ENCODE measurements at regions of chr1 and their contacts with region 1.

Region 1: GRCh38 chr1:170929835-170930554 is 5.3 kb upstream of the MROH9 start:
- DNase-seq: peak in 1 of 2 experiments; percentile 50
- H3K4me3 ChIP-seq: no peak overlapping the region
- H3K4me3 Mint-ChIP-seq: no peak overlapping the region
- H3K27ac Mint-ChIP-seq: no peak overlapping the region
- H3K4me1 ChIP-seq: no peaks in the 10 kb centered on the region
- H3K4me1 Mint-ChIP-seq: no peaks in the 10 kb centered on the region
- H3K27me3 ChIP-seq: no peaks in the 10 kb centered on the region
- H3K27me3 Mint-ChIP-seq: no peaks in the 10 kb centered on the region
- CTCF ChIP-seq: peak; percentile 55 to 74

Region 2: GRCh38 chr1:170692866-170693575 is 237.0 kb before region 1 on chr1:
- CTCF ChIA-PET with region 1: interaction called, 8 read pairs
- POLR2A ChIA-PET with region 1: no interaction called
- intact Hi-C with region 1: loop called (anchors 1 kb)
- DNase-seq: no peak
- H3K4me3 ChIP-seq: no peak overlapping the region
- H3K4me3 Mint-ChIP-seq: no peak overlapping the region
- H3K27ac Mint-ChIP-seq: no peak overlapping the region
- H3K4me1 ChIP-seq: 0 out of 2 replicates have a peak, but pooled peaks cover 4% of the 10 kb centered on the region
- H3K4me1 Mint-ChIP-seq: peaks cover 5% of the 10 kb centered on the region
- H3K27me3 ChIP-seq: no peaks in the 10 kb centered on the region
- H3K27me3 Mint-ChIP-seq: peaks cover 13% of the 10 kb centered on the region
- CTCF ChIP-seq: no peak

Region 3: GRCh38 chr1:170790175-170790574 is 139.8 kb before region 1 on chr1:
- CTCF ChIA-PET with region 1: no interaction called
- POLR2A ChIA-PET with region 1: no interaction called
- intact Hi-C with region 1: loop called (anchors 10 kb)
- DNase-seq: no peak
- H3K4me3 ChIP-seq: no peak overlapping the region
- H3K4me3 Mint-ChIP-seq: no peak overlapping the region
- H3K27ac Mint-ChIP-seq: no peak overlapping the region
- H3K4me1 ChIP-seq: no peaks in the 10 kb centered on the region
- H3K4me1 Mint-ChIP-seq: no peaks in the 10 kb centered on the region
- H3K27me3 ChIP-seq: no peaks in the 10 kb centered on the region
- H3K27me3 Mint-ChIP-seq: peaks cover 2% of the 10 kb centered on the region
- CTCF ChIP-seq: peak in 1 of 2 experiments; percentile 29

Region 4: GRCh38 chr1:170831276-170831675 is 98.7 kb before region 1 on chr1:
- CTCF ChIA-PET with region 1: no interaction called
- POLR2A ChIA-PET with region 1: no interaction called
- intact Hi-C with region 1: no loop called
- DNase-seq: no peak
- H3K4me3 ChIP-seq: no peak overlapping the region
- H3K4me3 Mint-ChIP-seq: no peak overlapping the region
- H3K27ac Mint-ChIP-seq: no peak overlapping the region
- H3K4me1 ChIP-seq: no peaks in the 10 kb centered on the region
- H3K4me1 Mint-ChIP-seq: no peaks in the 10 kb centered on the region
- H3K27me3 ChIP-seq: no peaks in the 10 kb centered on the region; the same call in 1 of the 2 replicates
- H3K27me3 Mint-ChIP-seq: peaks cover 3% of the 10 kb centered on the region
- CTCF ChIP-seq: no peak